ENCODE measurements at regions of chr17 and their contacts with region 1.

Region 1: DNA sequence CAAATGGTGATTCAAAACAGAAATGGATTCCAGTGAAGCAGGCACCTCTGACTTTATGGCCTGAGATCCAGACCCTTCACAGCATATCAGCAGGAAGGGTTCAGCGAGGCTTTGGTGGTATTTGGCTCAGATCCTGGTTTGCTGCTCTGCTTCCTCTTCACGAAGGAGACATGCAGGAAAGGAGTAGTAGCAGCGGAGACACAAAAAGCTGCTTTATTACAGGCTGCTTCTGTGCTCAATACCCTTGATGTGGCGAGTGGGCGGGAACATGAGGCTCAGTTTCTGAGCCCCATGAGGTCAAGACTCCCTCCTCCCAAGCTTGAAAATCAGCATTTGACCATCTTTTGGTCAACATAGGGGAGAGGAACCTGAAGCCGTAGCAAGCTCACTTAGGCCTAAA is 213.3 kb upstream of the AXIN2 start:
- DNase-seq: no peak
- H3K4me3 ChIP-seq: no peak overlapping the region
- CTCF ChIP-seq: no peak
- POLR2A ChIP-seq: no peak

Region 2: GRCh38 chr17:65604070-65604469 is 170.7 kb before region 1 on chr17:
- intact Hi-C with region 1: loop called (anchors 5 kb)
- DNase-seq: no peak
- H3K4me3 ChIP-seq: no peak overlapping the region
- CTCF ChIP-seq: no peak
- POLR2A ChIP-seq: no peak

Region 3: DNA sequence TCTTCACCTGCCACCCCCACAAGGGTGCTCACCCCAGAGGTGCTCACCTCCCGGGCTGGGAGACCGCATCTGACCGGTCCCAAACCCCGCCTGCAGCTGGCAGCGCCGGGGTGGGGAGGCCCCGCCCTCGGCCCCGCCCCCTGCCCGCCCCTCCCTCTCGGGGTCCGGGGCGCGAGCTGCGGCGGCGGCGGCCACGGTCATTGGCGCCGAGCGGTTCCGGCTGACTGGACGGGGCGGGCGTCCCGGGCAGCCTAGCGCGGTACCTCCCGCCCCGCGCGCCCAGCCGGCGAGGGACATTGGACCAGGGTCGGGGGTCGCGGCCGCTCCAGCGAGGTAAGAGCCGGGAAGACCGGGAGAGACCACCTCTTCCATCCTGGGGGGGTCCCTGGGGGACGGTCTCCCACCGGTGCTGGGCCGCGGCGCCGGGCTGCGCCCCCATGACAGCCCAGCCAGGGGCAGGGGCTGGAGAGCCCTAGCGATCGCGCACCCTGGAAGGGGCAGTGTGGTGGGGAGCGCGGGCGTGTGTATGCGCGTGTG is 1060.2 kb after region 1 on chr17 and contains the start of gene CACNG5:
- intact Hi-C with region 1: no loop called
- DNase-seq: peak in 1 of 2 donors; percentile 76
- H3K4me3 ChIP-seq: no peak within 1 kb of the TSS
- CTCF ChIP-seq: no peak
- POLR2A ChIP-seq: no peak
- total RNA-seq, gene CACNG5: not detected